Heart left ventricle (tissue), 16 donors: ENCODE measurements at regions of chr2 and their contacts with region 1.

Region 1: DNA sequence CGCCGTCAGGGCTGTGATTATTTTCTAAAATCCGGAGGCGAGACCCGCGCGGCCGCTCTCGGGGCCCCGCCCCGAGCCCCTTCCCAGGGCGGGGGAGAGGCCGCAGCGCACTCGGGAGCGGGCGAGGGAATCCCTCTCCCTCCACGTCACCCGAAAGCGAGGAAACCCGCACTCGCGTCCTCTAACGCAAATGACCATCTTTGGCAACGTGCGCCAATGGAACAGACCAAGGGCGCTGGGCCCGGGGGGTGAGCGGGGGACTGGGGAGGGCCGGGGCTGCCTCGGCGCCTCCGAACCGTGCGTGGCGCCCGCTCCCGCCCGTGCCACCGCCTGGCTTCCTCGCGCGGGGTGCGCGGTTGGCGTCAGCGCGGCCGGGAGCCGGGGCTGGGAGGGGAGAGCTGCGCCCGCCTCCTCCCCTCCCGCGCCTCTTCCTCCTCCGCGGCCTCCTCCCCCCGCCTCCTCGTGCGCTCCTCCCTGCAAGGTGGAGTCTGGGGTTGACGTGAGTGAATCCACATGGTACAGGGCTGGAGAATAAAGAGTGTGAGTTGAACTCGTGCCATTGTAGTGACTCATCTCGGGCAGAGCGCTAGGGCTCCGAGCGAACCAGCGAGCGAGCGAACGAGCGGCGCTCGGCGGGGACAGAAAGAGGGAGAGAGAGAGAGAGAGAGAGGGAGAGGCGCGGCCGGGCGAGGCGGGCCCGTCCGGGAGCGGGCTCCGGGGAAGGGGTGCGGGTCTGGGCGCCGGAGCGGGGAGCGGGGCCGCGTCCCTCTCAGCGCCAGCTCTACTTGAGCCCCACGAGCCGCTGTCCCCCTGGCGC is at the start of gene FOSL2:
- DNase-seq: peak; percentile 97 to 98 (median 98)
- ATAC-seq: peak; percentile 66 to 85 (median 74)
- H3K4me3 ChIP-seq: peak within 1 kb of the TSS; percentile 82 to 100 (median 96)
- H3K27ac ChIP-seq: peak within 1 kb of the TSS; percentile 94 to 100 (median 100)
- H3K4me1 ChIP-seq: peaks cover 7 to 35% (median 24%) of the 10 kb centered on the region in 12 donors
- H3K27me3 ChIP-seq: no peaks in the 10 kb centered on the region
- CTCF ChIP-seq: peak in 1 of 12 donors; percentile 12
- POLR2A ChIP-seq: peak; percentile 84 to 99
- total RNA-seq, gene FOSL2: 26.2 to 144 (median 50.2) TPM

Region 2: GRCh38 chr2:27723372-27724144 is 668.9 kb before region 1 on chr2:
- intact Hi-C with region 1: loop called in 9 of 10 experiments (anchors 5 to 10 kb)
- DNase-seq: peak; percentile 68 to 78 (median 73)
- ATAC-seq: peak; percentile 41 to 71 (median 64)
- H3K4me3 ChIP-seq: no peak overlapping the region
- H3K27ac ChIP-seq: peak overlapping the region; percentile 6 to 94 (median 72)
- H3K4me1 ChIP-seq: peaks cover 0 to 59% (median 37%) of the 10 kb centered on the region in 12 donors
- H3K27me3 ChIP-seq: no peaks in the 10 kb centered on the region
- CTCF ChIP-seq: peak; percentile 63 to 91 (median 85)
- POLR2A ChIP-seq: no peak

Region 3: GRCh38 chr2:27798948-27799645 is 593.4 kb before region 1 on chr2:
- intact Hi-C with region 1: loop called in 4 of 10 experiments (anchors 1 to 5 kb)
- DNase-seq: peak in 4 of 5 donors; percentile 38 to 84 (median 56)
- ATAC-seq: peak; percentile 30 to 72 (median 56)
- H3K4me3 ChIP-seq: no peak overlapping the region
- H3K27ac ChIP-seq: peak overlapping the region; percentile 43 to 98 (median 88)
- H3K4me1 ChIP-seq: peaks cover 5 to 64% (median 48%) of the 10 kb centered on the region in 12 donors
- H3K27me3 ChIP-seq: no peaks in the 10 kb centered on the region
- CTCF ChIP-seq: no peak
- POLR2A ChIP-seq: no peak

Region 4: GRCh38 chr2:28030600-28030999 is 361.9 kb before region 1 on chr2:
- intact Hi-C with region 1: loop called in 2 of 10 experiments (anchors 5 kb)
- DNase-seq: peak in 3 of 5 donors; percentile 6 to 29 (median 23)
- ATAC-seq: peak in 1 of 4 donors; percentile 61
- H3K4me3 ChIP-seq: no peak overlapping the region
- H3K27ac ChIP-seq: peak overlapping the region in 2 of 12 donors; percentile 21 to 35
- H3K4me1 ChIP-seq: peaks cover 0 to 30% (median 14%) of the 10 kb centered on the region in 12 donors
- H3K27me3 ChIP-seq: no peaks in the 10 kb centered on the region
- CTCF ChIP-seq: no peak
- POLR2A ChIP-seq: no peak

Region 5: GRCh38 chr2:28233164-28233676 is 159.3 kb before region 1 on chr2:
- intact Hi-C with region 1: loop called in 3 of 10 experiments (anchors 10 kb)
- DNase-seq: no peak
- ATAC-seq: no peak
- H3K4me3 ChIP-seq: no peak overlapping the region
- H3K27ac ChIP-seq: peak overlapping the region in 1 of 12 donors; percentile 20
- H3K4me1 ChIP-seq: peaks cover 0 to 25% (median 3%) of the 10 kb centered on the region in 12 donors
- H3K27me3 ChIP-seq: no peaks in the 10 kb centered on the region
- CTCF ChIP-seq: no peak
- POLR2A ChIP-seq: no peak

Region 6: GRCh38 chr2:28305202-28305601 is 87.3 kb before region 1 on chr2:
- intact Hi-C with region 1: no loop called
- DNase-seq: no peak
- ATAC-seq: no peak
- H3K4me3 ChIP-seq: no peak overlapping the region
- H3K27ac ChIP-seq: no peak overlapping the region
- H3K4me1 ChIP-seq: peaks cover 0 to 4% (median 0%) of the 10 kb centered on the region in 12 donors
- H3K27me3 ChIP-seq: no peaks in the 10 kb centered on the region
- CTCF ChIP-seq: no peak
- POLR2A ChIP-seq: no peak

Region 7: DNA sequence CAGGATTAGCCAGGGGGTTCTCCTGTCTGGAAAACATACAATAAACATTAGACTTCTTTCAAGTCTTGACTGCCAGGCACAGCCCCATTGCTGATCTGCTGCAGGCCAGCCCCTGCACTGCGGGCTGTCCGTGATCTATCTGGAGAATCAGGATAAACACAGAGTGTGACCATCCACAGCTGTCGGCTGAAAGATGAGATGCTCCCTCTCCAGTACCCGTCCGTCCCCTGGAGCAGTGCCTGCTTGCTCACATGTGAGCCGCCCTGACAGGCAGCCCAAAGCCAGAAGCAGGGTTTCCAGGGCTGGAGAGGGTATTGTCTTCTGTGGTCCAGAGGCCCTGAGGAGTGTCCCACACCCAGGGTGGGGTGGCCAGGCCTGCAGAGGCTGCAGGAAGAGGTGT is 45.9 kb before region 1 on chr2:
- intact Hi-C with region 1: loop called in 6 of 10 experiments (anchors 5 kb)
- DNase-seq: peak in 1 of 5 donors; percentile 21
- ATAC-seq: no peak
- H3K4me3 ChIP-seq: no peak overlapping the region
- H3K27ac ChIP-seq: no peak overlapping the region
- H3K4me1 ChIP-seq: peaks cover 0 to 46% (median 16%) of the 10 kb centered on the region in 12 donors
- H3K27me3 ChIP-seq: no peaks in the 10 kb centered on the region
- CTCF ChIP-seq: no peak
- POLR2A ChIP-seq: no peak

Region 8: GRCh38 chr2:28376892-28377838 is 15.3 kb before region 1 on chr2:
- intact Hi-C with region 1: no loop called
- DNase-seq: no peak
- ATAC-seq: peak in 1 of 4 donors; percentile 26
- H3K4me3 ChIP-seq: no peak overlapping the region
- H3K27ac ChIP-seq: no peak overlapping the region
- H3K4me1 ChIP-seq: peaks cover 0 to 24% (median 0%) of the 10 kb centered on the region in 12 donors
- H3K27me3 ChIP-seq: no peaks in the 10 kb centered on the region
- CTCF ChIP-seq: no peak
- POLR2A ChIP-seq: no peak